Naive thymus-derived CD4-positive, alpha-beta T cell (primary cell): ENCODE measurements at regions of chr3 and their contacts with region 1.

Region 1: GRCh38 chr3:9362731-9363530 is at the start of gene THUMPD3:
- DNase-seq: peak; percentile 77 to 97 (median 85)
- ATAC-seq: peak; percentile 94
- H3K4me3 ChIP-seq: peak within 1 kb of the TSS; percentile 99
- H3K4me3 Mint-ChIP-seq: peak within 1 kb of the TSS; percentile 94 to 100 (median 98)
- H3K27ac ChIP-seq: peak within 1 kb of the TSS; percentile 85
- H3K27ac Mint-ChIP-seq: peak within 1 kb of the TSS; percentile 96 to 100 (median 98)
- H3K4me1 ChIP-seq: peaks cover 7 to 14% of the 10 kb centered on the region in 2 donors
- H3K4me1 Mint-ChIP-seq: peaks cover 0 to 44% (median 30%) of the 10 kb centered on the region in 7 donors
- H3K27me3 ChIP-seq: no peaks in the 10 kb centered on the region
- H3K27me3 Mint-ChIP-seq: peaks cover 0 to 3% (median 0%) of the 10 kb centered on the region in 5 donors
- total RNA-seq, gene THUMPD3: 39.4 to 54.8 (median 42.4) TPM

Region 2: DNA sequence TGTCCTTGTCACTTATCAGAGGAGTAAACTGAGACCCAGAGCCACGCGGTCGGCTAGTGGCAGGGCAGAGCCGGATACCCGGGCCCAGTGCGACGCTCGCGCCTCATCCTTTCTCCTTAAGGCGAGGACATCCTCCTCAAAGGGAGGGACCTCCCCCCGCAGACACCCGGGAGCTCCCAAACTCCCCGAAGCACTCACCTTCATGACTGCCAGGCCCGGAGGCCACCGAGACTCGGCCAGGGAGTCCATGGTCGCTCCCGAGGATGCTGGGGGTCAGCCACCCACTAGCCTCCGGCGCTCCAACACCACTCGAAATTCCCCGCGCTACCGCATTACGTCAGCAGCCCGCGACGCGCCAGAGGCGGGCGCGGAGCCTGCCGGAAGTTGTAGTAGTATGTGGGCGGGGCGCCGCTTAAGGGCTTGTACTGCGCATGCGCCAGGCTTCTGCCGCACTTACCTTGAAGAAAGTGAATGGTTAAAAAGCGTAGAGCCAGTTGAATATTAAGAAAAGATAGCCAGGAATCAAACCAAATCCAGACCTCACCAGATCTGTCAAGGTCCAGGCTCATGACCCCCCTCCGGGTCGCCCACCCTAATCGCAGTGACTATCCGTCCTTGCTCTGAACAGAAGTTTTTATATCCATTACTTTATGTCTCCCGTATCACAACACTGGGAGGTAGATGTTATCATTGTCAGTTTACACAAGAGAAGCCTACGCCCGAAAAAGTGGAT is 399.6 kb before region 1 on chr3 and contains the start of gene RAD18:
- CTCF ChIA-PET with region 1: no interaction called
- POLR2A ChIA-PET with region 1: no interaction called
- intact Hi-C with region 1: loop called (anchors 1 to 5 kb)
- DNase-seq: peak; percentile 87 to 95 (median 92)
- ATAC-seq: peak; percentile 97
- H3K4me3 ChIP-seq: peak within 1 kb of the TSS; percentile 80
- H3K4me3 Mint-ChIP-seq: peak within 1 kb of the TSS; percentile 85 to 99 (median 96)
- H3K27ac ChIP-seq: peak within 1 kb of the TSS; percentile 94
- H3K27ac Mint-ChIP-seq: peak within 1 kb of the TSS; percentile 94 to 99 (median 97)
- H3K4me1 ChIP-seq: peaks cover 6 to 10% of the 10 kb centered on the region in 2 donors
- H3K4me1 Mint-ChIP-seq: peaks cover 7 to 45% (median 38%) of the 10 kb centered on the region in 7 donors
- H3K27me3 ChIP-seq: no peaks in the 10 kb centered on the region
- H3K27me3 Mint-ChIP-seq: peaks cover 0 to 8% (median 4%) of the 10 kb centered on the region in 5 donors
- total RNA-seq, gene RAD18: 9.3 to 36.4 (median 18.2) TPM

Region 3: DNA sequence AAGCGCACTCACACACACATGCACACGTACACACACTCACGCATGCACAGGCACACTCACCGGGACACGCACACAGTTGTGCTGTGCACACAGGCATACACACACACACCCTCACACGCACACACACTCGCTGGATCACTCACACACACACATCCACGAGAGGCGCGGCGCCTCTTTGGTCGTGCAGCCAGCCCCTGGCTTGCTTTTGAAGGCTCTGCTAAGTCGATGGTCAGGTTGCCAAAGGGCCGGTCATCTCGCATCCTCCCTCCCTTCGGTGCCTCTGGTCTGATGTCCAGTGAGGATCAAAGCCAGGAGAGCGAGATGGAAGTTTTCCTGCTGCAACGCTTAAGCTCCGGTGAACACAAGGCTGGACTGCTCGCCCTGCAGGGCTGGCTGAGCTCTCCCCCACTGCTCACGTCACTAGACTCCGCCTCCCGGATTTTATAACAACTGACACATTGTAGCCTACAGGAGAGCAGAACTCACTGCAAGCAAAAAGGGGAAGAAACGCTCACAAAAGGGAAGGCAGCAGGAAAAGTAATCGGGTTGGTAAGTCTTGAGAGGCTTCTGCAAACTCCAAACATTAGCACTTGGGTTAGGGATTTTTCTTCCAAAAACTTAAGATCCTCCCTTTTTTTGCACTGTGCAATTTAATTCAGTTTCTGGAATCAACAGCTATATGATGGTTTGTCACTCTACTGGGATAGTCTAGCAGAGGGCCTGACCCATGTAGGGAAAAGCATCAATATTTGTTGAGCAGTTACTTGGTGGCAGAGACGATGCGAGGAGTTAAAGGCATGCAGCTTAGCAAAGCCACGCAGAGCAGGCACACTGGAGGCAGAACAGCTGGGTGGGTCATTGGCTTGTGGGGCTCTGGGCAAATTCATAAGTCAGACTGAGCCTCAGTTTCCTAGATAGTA is 113.4 kb before region 1 on chr3 and contains the start of gene SRGAP3:
- CTCF ChIA-PET with region 1: no interaction called
- POLR2A ChIA-PET with region 1: no interaction called
- intact Hi-C with region 1: loop called in 1 of 2 experiments (anchors 5 kb)
- DNase-seq: peak; percentile 45 to 85 (median 80)
- ATAC-seq: peak; percentile 99
- H3K4me3 ChIP-seq: peak within 1 kb of the TSS; percentile 91
- H3K4me3 Mint-ChIP-seq: peak within 1 kb of the TSS; percentile 82 to 99 (median 92)
- H3K27ac ChIP-seq: peak within 1 kb of the TSS; percentile 60
- H3K27ac Mint-ChIP-seq: peak within 1 kb of the TSS; percentile 3 to 89 (median 78)
- H3K4me1 ChIP-seq: peaks cover 0 to 6% of the 10 kb centered on the region in 2 donors
- H3K4me1 Mint-ChIP-seq: peaks cover 9 to 43% (median 28%) of the 10 kb centered on the region in 7 donors
- H3K27me3 ChIP-seq: no peaks in the 10 kb centered on the region
- H3K27me3 Mint-ChIP-seq: peaks cover 0 to 29% (median 4%) of the 10 kb centered on the region in 5 donors
- total RNA-seq, gene SRGAP3: 1.4 to 6.0 (median 4.8) TPM

Region 4: GRCh38 chr3:9339761-9340471 is 23.0 kb before region 1 on chr3:
- CTCF ChIA-PET with region 1: no interaction called
- POLR2A ChIA-PET with region 1: no interaction called
- intact Hi-C with region 1: no loop called
- DNase-seq: no peak
- ATAC-seq: no peak
- H3K4me3 ChIP-seq: no peak overlapping the region
- H3K4me3 Mint-ChIP-seq: no peak overlapping the region
- H3K27ac ChIP-seq: no peak overlapping the region
- H3K27ac Mint-ChIP-seq: peak overlapping the region in 1 of 9 donors; percentile 50
- H3K4me1 ChIP-seq: no peaks in the 10 kb centered on the region
- H3K4me1 Mint-ChIP-seq: no peaks in the 10 kb centered on the region
- H3K27me3 ChIP-seq: no peaks in the 10 kb centered on the region
- H3K27me3 Mint-ChIP-seq: peaks cover 0 to 4% (median 0%) of the 10 kb centered on the region in 5 donors

Region 5: DNA sequence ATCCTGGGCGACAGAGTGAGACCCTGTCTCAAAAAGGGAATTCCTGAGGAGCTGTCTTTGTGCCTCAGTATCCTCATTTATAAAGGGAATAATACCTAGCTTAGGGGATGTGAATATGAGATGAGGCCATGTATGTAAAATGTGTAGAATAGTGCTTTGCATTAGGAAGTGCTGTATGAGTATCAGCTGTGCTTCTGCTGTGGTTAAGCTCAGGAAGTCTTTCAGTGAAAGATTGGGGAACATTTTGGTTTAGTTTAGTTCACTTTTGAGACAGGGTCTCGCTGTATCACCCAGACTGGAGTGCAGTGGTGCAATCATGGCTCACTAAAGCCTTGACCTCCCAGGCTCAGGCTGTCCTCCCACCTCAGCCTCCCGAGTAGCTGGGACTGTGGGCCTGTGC is 10.5 kb after region 1 on chr3:
- CTCF ChIA-PET with region 1: interaction called, 3 read pairs
- POLR2A ChIA-PET with region 1: interaction called, 11 read pairs
- intact Hi-C with region 1: loop called in 1 of 2 experiments (anchors 2 kb)
- DNase-seq: no peak
- ATAC-seq: peak; percentile 29
- H3K4me3 ChIP-seq: no peak overlapping the region
- H3K4me3 Mint-ChIP-seq: peak overlapping the region; percentile 4 to 51 (median 39)
- H3K27ac ChIP-seq: no peak overlapping the region
- H3K27ac Mint-ChIP-seq: peak overlapping the region in 7 of 9 donors; percentile 29 to 76 (median 49)
- H3K4me1 ChIP-seq: peaks cover 3 to 9% of the 10 kb centered on the region in 2 donors
- H3K4me1 Mint-ChIP-seq: peaks cover 24 to 76% (median 66%) of the 10 kb centered on the region in 7 donors
- H3K27me3 ChIP-seq: no peaks in the 10 kb centered on the region
- H3K27me3 Mint-ChIP-seq: no peaks in the 10 kb centered on the region

Region 6: GRCh38 chr3:9422712-9423424 is 59.9 kb after region 1 on chr3:
- CTCF ChIA-PET with region 1: interaction called, 3 read pairs
- POLR2A ChIA-PET with region 1: interaction called, 5 read pairs
- intact Hi-C with region 1: loop called in 1 of 2 experiments (anchors 2 kb)
- DNase-seq: peak in 7 of 9 donors; percentile 20 to 46 (median 37)
- ATAC-seq: peak; percentile 86
- H3K4me3 ChIP-seq: no peak overlapping the region
- H3K4me3 Mint-ChIP-seq: peak overlapping the region in 4 of 10 donors; percentile 2 to 26 (median 4)
- H3K27ac ChIP-seq: peak overlapping the region; percentile 26
- H3K27ac Mint-ChIP-seq: peak overlapping the region; percentile 23 to 91 (median 84)
- H3K4me1 ChIP-seq: peaks cover 0 to 9% of the 10 kb centered on the region in 2 donors
- H3K4me1 Mint-ChIP-seq: peaks cover 23 to 63% (median 56%) of the 10 kb centered on the region in 7 donors
- H3K27me3 ChIP-seq: no peaks in the 10 kb centered on the region
- H3K27me3 Mint-ChIP-seq: no peaks in the 10 kb centered on the region

Region 7: GRCh38 chr3:9452417-9452816 is 89.5 kb after region 1 on chr3:
- CTCF ChIA-PET with region 1: no interaction called
- POLR2A ChIA-PET with region 1: interaction called, 4 read pairs
- intact Hi-C with region 1: loop called in 1 of 2 experiments (anchors 2 kb)
- DNase-seq: peak in 2 of 9 donors; percentile 0 to 9
- ATAC-seq: no peak
- H3K4me3 ChIP-seq: no peak overlapping the region
- H3K4me3 Mint-ChIP-seq: peak overlapping the region in 3 of 10 donors; percentile 25 to 86 (median 50)
- H3K27ac ChIP-seq: peak overlapping the region; percentile 11
- H3K27ac Mint-ChIP-seq: peak overlapping the region in 8 of 9 donors; percentile 45 to 98 (median 82)
- H3K4me1 ChIP-seq: peaks cover 0 to 3% of the 10 kb centered on the region in 2 donors
- H3K4me1 Mint-ChIP-seq: peaks cover 11 to 34% (median 18%) of the 10 kb centered on the region in 7 donors
- H3K27me3 ChIP-seq: no peaks in the 10 kb centered on the region
- H3K27me3 Mint-ChIP-seq: no peaks in the 10 kb centered on the region

Region 8: DNA sequence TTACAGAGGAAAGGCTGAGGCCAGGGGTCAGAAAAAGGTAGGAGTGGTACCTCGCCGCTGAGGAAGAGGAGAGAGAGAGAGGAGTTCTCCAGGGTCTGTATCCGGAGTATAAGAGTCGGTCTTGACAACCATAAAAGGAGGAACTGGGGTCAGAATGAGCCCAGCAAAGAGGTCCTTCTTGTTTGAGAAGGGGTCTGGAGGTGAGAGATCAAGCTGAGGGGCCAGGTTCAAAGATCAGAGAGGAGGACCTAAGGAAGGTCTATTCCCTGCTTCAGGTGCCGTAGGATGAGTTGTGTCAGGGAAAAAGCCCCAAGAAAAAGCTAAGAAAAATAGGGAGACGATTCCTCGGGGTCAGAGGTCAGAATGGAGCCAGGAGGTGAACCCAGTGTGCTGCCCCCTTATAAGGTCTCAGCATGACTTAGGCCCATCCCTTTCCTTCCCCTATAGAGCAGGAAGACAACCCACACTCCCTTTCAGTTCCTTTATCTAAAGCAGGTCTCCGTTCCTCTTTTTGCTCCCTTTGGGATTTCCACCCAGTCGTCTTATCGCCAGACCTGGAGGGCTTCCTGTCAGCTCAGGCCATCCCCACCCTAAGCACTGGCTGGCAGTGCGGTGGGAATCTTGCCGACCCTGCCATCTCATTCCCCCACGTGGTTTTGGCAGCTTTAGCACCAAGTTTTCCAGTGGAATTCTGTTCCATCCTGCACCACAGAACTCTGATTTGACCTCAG is 287.0 kb after region 1 on chr3:
- CTCF ChIA-PET with region 1: no interaction called
- POLR2A ChIA-PET with region 1: interaction called, 3 read pairs
- intact Hi-C with region 1: loop called (anchors 1 kb)
- DNase-seq: peak in 2 of 9 donors; percentile 4 to 5
- ATAC-seq: peak; percentile 15
- H3K4me3 ChIP-seq: peak overlapping the region; percentile 97
- H3K4me3 Mint-ChIP-seq: peak overlapping the region; percentile 86 to 98 (median 95)
- H3K27ac ChIP-seq: peak overlapping the region; percentile 85
- H3K27ac Mint-ChIP-seq: peak overlapping the region; percentile 91 to 98 (median 97)
- H3K4me1 ChIP-seq: peaks cover 15 to 19% of the 10 kb centered on the region in 2 donors
- H3K4me1 Mint-ChIP-seq: peaks cover 19 to 51% (median 37%) of the 10 kb centered on the region in 7 donors
- H3K27me3 ChIP-seq: no peaks in the 10 kb centered on the region
- H3K27me3 Mint-ChIP-seq: peaks cover 0 to 3% (median 0%) of the 10 kb centered on the region in 5 donors

Region 9: DNA sequence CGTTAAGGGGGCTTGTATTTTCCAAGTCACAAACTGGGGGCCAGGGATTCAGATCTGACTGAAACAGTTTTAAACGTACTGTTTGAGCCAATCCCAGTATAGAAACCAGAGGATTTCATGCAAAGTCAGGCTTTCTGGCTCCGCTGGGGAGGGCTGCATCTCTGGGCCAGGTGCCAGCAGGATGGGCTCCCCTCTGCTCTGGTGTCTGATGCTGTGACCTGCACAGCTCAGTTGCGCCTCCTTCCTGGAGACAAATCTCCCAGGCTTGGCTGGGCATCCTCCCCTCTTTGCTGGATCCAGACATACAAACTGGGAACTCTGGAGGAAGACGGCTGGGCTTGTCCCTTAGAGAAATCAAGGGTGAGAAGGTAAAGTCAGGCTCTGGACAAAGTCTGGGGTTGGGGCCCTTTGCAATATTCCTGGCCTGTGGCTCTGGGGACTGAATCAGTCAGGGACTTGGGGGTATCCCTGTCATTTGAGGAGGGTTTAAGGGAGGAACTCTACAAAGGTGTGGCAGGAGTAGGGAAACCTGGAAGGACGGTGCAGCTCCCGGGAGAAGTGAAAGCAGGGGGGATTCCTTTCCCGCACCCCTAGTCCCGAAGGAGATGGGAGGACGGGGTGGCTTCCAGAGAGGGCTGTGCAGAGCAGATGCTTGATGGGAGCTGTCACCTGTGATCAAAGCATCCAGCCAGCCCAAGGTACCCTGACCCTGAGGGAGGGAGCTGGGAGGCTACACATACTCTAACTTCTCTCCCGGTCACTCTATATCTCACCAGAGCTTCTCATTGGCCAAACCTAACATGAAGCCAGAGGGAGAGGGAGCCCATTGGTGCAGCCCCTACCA is 1257.3 kb after region 1 on chr3:
- CTCF ChIA-PET with region 1: no interaction called
- POLR2A ChIA-PET with region 1: no interaction called
- intact Hi-C with region 1: no loop called
- DNase-seq: no peak
- ATAC-seq: no peak
- H3K4me3 ChIP-seq: no peak overlapping the region
- H3K4me3 Mint-ChIP-seq: no peak overlapping the region
- H3K27ac ChIP-seq: no peak overlapping the region
- H3K27ac Mint-ChIP-seq: no peak overlapping the region
- H3K4me1 ChIP-seq: no peaks in the 10 kb centered on the region
- H3K4me1 Mint-ChIP-seq: peaks cover 0 to 1% (median 0%) of the 10 kb centered on the region in 7 donors
- H3K27me3 ChIP-seq: no peaks in the 10 kb centered on the region
- H3K27me3 Mint-ChIP-seq: peaks cover 0 to 34% (median 14%) of the 10 kb centered on the region in 5 donors